Activated naive CD4-positive, alpha-beta T cell treated with anti-CD3 and anti-CD28 coated beads for 36 hours (primary cell): ENCODE measurements at regions of chr19 and their contacts with region 1.

Region 1: DNA sequence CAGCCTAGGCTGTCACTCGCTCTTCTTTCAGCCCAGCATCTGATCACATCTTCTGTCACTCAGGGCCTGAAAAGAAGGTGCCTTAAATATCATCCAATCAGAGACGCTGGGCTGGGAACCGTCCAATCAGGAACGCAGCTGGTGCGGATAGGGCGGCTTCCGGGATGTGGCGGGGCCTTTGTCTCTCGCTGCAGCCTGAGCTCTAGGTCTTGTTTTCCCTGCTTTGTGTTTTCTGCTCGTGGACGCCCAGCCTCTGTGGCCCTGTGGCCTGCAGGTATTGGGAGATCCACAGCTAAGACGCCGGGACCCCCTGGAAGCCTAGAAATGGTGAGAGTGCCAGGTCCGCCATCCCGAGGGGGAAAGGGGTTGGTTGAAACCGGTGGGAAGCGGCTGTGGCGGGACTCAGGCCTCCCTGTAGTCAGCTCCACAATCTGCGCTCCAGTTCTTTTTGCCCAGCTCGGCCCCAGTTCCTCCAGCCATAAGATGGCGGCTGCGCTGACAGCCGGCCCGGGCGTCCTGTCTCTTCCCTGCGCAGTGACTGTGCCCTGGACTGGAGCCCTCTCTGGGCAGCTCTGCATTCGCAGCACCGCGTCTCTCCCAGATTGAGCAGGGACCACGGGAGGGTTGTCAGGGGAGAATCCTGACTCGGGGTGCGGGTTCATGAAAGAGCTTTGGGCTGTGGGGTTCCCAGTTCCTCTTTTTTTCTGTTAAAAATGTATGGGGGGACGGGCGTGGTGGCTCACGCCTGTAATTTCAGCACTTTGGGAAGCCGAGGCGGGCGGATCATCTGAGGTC is at the start of gene ZNF85:
- DNase-seq: peak; percentile 96
- H3K4me3 Mint-ChIP-seq: peak within 1 kb of the TSS; percentile 97
- H3K27ac Mint-ChIP-seq: peak within 1 kb of the TSS; percentile 94
- H3K4me1 Mint-ChIP-seq: peaks cover 17% of the 10 kb centered on the region
- H3K27me3 Mint-ChIP-seq: no peaks in the 10 kb centered on the region
- total RNA-seq, gene ZNF85: 12.8 to 15.1 TPM

Region 2: GRCh38 chr19:20167020-20167644 is 756.1 kb before region 1 on chr19 and contains the start of gene ZNF486:
- CTCF ChIA-PET with region 1: no interaction called
- intact Hi-C with region 1: loop called (anchors 1 kb)
- DNase-seq: peak; percentile 98
- H3K4me3 Mint-ChIP-seq: peak within 1 kb of the TSS; percentile 98
- H3K27ac Mint-ChIP-seq: peak within 1 kb of the TSS; percentile 91
- H3K4me1 Mint-ChIP-seq: peaks cover 19% of the 10 kb centered on the region
- H3K27me3 Mint-ChIP-seq: no peaks in the 10 kb centered on the region
- total RNA-seq, gene ZNF486: 11.3 to 13.2 TPM

Region 3: GRCh38 chr19:20661150-20661819 is 262.0 kb before region 1 on chr19 and contains the start of gene ZNF626:
- CTCF ChIA-PET with region 1: no interaction called
- intact Hi-C with region 1: loop called (anchors 2 kb)
- DNase-seq: peak; percentile 97
- H3K4me3 Mint-ChIP-seq: peak within 1 kb of the TSS; percentile 93
- H3K27ac Mint-ChIP-seq: peak within 1 kb of the TSS; percentile 91
- H3K4me1 Mint-ChIP-seq: peaks cover 20% of the 10 kb centered on the region
- H3K27me3 Mint-ChIP-seq: no peaks in the 10 kb centered on the region
- total RNA-seq, gene ZNF626: 8.2 to 9.8 TPM

Region 4: GRCh38 chr19:21020298-21021227 is 97.3 kb after region 1 on chr19 and contains the start of gene ZNF430:
- CTCF ChIA-PET with region 1: no interaction called
- intact Hi-C with region 1: loop called (anchors 1 kb)
- DNase-seq: peak; percentile 98
- H3K4me3 Mint-ChIP-seq: peak within 1 kb of the TSS; percentile 98
- H3K27ac Mint-ChIP-seq: peak within 1 kb of the TSS; percentile 98
- H3K4me1 Mint-ChIP-seq: peaks cover 42% of the 10 kb centered on the region
- H3K27me3 Mint-ChIP-seq: no peaks in the 10 kb centered on the region
- total RNA-seq, gene ZNF430: 18.2 to 19.5 TPM

Region 5: GRCh38 chr19:21328885-21329605 is 405.8 kb after region 1 on chr19 and contains the start of gene ZNF708:
- CTCF ChIA-PET with region 1: no interaction called
- intact Hi-C with region 1: loop called (anchors 2 kb)
- DNase-seq: peak; percentile 90
- H3K4me3 Mint-ChIP-seq: peak within 1 kb of the TSS; percentile 98
- H3K27ac Mint-ChIP-seq: peak within 1 kb of the TSS; percentile 98
- H3K4me1 Mint-ChIP-seq: peaks cover 33% of the 10 kb centered on the region
- H3K27me3 Mint-ChIP-seq: no peaks in the 10 kb centered on the region
- total RNA-seq, gene ZNF708: 7.8 to 10.9 TPM

Region 6: GRCh38 chr19:21851596-21852345 is 928.5 kb after region 1 on chr19:
- CTCF ChIA-PET with region 1: no interaction called
- intact Hi-C with region 1: loop called (anchors 10 kb)
- DNase-seq: peak; percentile 97
- H3K4me3 Mint-ChIP-seq: peak overlapping the region; percentile 88
- H3K27ac Mint-ChIP-seq: peak overlapping the region; percentile 91
- H3K4me1 Mint-ChIP-seq: peaks cover 31% of the 10 kb centered on the region
- H3K27me3 Mint-ChIP-seq: no peaks in the 10 kb centered on the region